Activated CD8-positive, alpha-beta T cell treated with anti-CD3 and anti-CD28 coated beads, Interleukin-2, amount 10 ng/mL, durations not matched to agents 7 days and 5 days (primary cell): ENCODE measurements at regions of chr21 and their contacts with region 1.

Region 1: GRCh38 chr21:29018540-29018939 is 609 bp downstream of the RWDD2B start:
- DNase-seq: no peak
- ATAC-seq: no peak
- H3K4me3 Mint-ChIP-seq: peak overlapping the region; percentile 79
- H3K27ac Mint-ChIP-seq: peak overlapping the region; percentile 92
- H3K4me1 Mint-ChIP-seq: peaks cover 35% of the 10 kb centered on the region
- H3K27me3 Mint-ChIP-seq: no peaks in the 10 kb centered on the region

Region 2: GRCh38 chr21:28992526-28993292 is 25.8 kb before region 1 on chr21 and contains the start of gene LTN1:
- CTCF ChIA-PET with region 1: interaction called, 5 read pairs
- POLR2A ChIA-PET with region 1: interaction called, 47 read pairs
- DNase-seq: peak; percentile 100
- ATAC-seq: peak; percentile 94
- H3K4me3 Mint-ChIP-seq: peak within 1 kb of the TSS; percentile 84
- H3K27ac Mint-ChIP-seq: peak within 1 kb of the TSS; percentile 98
- H3K4me1 Mint-ChIP-seq: peaks cover 28% of the 10 kb centered on the region
- H3K27me3 Mint-ChIP-seq: no peaks in the 10 kb centered on the region
- total RNA-seq, gene LTN1: 23.5 to 25.9 TPM

Region 3: DNA sequence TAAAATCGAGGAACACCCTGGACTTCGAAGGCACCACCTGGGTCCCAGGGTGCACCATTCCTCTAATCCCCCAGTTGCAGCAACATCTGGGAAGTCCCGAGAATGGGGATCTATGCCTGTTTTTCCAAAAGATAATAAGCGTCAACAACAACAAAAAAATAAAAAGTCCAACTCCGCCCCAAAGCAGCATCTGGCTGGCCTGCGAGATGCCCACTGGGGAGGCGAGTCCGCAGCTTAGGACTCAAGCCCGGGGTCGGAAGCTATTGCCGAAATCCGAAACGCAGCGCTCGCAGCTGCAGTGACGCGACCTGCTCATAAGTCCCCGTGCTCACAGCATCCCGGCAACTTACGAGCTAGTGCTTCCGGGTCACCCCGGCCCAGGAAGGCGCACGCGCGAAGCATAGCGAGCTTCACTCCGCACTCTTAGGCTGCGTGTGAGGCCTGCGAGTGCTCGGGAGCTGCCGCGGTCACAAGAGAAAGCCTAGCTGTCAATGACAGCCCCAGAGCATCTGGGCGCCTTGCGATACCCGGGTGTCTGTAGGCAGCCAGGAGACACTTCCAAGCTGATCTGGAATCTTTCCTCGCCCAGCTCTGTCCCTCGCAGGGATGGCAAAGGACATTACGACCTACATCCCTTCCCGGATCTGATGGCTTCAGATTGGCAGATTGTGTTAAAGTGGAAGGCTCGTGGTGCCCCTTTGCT is 15.9 kb before region 1 on chr21:
- CTCF ChIA-PET with region 1: interaction called, 14 read pairs
- POLR2A ChIA-PET with region 1: interaction called, 93 read pairs
- DNase-seq: peak; percentile 97
- ATAC-seq: peak; percentile 100
- H3K4me3 Mint-ChIP-seq: peak overlapping the region; percentile 88
- H3K27ac Mint-ChIP-seq: peak overlapping the region; percentile 96
- H3K4me1 Mint-ChIP-seq: peaks cover 19% of the 10 kb centered on the region
- H3K27me3 Mint-ChIP-seq: no peaks in the 10 kb centered on the region